ENCODE measurements at regions of chr1 and their contacts with region 1.

Region 1: GRCh38 chr1:97151651-97152050 is 430.1 kb downstream of the PTBP2 start:
- DNase-seq: no peak
- H3K4me3 ChIP-seq: no peak overlapping the region
- H3K27ac ChIP-seq: no peak overlapping the region
- H3K4me1 ChIP-seq: no peaks in the 10 kb centered on the region
- H3K27me3 ChIP-seq: no peaks in the 10 kb centered on the region

Region 2: DNA sequence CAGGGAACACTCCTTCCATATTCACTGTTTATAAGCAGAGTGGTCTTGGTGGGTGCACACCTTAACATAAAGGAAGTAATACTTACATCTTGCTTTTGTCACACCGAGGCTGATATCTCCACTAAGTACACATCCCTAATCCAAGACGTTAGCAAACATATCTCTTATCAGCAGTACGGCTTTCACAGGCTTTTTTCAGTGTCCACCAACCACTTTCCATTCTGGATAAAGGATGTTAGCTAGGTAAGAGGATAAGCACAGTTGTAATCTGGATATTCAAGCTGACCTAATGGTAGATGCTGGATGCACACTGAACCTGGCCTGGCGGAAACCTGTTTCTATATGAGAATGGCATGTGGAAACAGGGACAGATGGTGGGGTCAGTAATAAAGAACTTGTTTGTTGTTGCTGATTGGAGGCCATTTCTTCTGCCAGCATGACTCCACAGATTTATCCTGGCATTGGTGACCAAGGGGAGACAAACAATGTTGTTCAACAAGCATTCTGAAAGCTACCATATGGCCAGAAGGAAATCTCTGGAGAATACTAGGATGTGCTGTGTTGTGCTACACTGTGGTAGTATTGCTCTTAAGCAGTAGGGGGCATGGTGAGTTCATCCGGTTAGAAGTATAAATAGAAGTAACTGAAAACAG is 13.7 kb before region 1 on chr1:
- CTCF ChIA-PET with region 1: interaction called, 10 read pairs
- POLR2A ChIA-PET with region 1: no interaction called
- DNase-seq: peak; percentile 56 to 80 (median 76)
- H3K4me3 ChIP-seq: peak overlapping the region in 2 of 7 experiments; percentile 69 to 71
- H3K27ac ChIP-seq: peak overlapping the region in 1 of 2 experiments; percentile 16
- H3K4me1 ChIP-seq: peaks cover 1 to 12% (median 10%) of the 10 kb centered on the region in 4 experiments
- H3K27me3 ChIP-seq: no peaks in the 10 kb centered on the region